ENCODE measurements at regions of chr6 and their contacts with region 1.

Region 1: DNA sequence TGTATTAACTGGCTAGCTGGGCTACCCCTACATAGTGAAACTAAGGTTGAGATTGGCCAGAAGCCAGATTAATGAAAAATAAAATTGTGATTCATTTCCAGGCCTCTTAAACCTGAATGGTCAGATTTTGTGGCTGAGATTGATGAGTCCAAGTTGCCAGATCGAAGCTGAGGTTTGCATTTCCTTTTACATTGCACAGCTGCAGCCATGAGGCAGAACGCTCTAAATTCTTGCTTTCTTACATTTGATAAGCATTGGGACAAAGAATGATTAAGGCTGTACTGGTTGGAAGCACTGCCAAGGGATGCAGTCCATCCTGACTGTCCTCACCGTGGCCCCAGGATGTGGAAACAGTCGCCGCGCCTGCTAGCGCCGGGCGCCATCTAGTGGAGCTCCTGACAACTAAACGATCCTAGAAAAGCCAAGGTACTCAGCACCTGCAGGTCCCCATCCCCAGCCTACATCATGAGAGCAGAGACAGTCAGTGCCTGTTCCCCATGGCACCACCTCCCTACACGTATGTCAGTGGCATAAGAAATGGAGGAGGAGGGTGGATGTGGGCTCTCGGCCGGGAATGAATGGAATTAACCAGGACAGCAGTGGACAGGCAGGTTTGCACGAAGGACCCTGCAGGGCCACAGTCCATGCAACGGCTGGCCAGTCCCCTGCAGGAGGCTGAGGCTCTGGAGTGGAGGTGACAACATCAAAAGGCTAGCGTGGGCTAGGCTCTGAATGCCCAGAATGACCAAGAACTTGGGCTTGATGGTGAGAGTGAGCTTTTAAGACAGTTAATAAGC is 19.0 kb downstream of the PXDC1 start:
- DNase-seq: peak; percentile 69
- H3K4me3 Mint-ChIP-seq: no peak overlapping the region
- H3K27ac Mint-ChIP-seq: no peak overlapping the region
- H3K4me1 Mint-ChIP-seq: peaks cover 7% of the 10 kb centered on the region
- H3K27me3 Mint-ChIP-seq: peaks cover 6% of the 10 kb centered on the region

Region 2: DNA sequence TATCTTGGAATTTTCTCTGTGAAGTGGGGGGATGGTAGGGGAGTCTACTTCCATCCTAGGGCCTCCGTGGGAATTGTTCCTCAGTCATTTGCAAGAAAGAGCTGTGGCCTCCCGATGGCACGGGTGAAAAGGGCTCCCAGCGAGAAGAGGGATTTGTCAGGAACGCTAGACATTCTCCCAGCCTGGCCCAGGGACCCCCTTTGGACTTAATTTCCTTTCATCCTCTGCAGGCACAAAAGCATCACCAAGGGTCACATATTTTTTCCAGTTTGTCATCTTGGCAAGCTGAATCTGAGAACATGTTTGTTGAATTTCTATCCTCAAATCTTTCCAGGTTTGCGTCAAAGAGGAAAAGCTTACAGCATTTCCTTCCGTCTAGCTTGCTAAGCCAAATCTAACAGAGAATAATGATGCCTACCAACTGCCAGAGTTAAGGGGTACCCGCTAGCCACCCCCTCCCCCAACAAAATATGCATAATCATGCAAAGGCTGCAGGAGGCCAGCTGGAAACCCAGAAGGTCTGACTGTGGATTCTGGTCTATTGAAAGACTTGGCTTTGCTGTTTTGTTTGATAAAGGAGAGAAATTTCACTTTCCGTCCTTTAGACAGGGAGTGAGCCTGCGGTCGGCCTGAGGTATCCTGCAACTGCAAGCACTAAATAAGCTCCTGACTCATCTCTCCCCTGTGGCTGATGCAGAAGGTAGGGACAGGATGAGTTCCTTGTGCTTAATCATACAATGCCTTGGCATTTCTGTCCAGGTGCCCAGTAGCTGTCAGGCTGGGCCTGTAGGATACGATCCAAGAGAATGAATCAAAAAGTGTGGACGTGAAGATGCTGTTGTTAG is 450.7 kb before region 1 on chr6:
- CTCF ChIA-PET with region 1: interaction called, 50 read pairs
- POLR2A ChIA-PET with region 1: no interaction called
- DNase-seq: no peak
- H3K4me3 Mint-ChIP-seq: no peak overlapping the region
- H3K27ac Mint-ChIP-seq: no peak overlapping the region
- H3K4me1 Mint-ChIP-seq: no peaks in the 10 kb centered on the region
- H3K27me3 Mint-ChIP-seq: no peaks in the 10 kb centered on the region

Region 3: DNA sequence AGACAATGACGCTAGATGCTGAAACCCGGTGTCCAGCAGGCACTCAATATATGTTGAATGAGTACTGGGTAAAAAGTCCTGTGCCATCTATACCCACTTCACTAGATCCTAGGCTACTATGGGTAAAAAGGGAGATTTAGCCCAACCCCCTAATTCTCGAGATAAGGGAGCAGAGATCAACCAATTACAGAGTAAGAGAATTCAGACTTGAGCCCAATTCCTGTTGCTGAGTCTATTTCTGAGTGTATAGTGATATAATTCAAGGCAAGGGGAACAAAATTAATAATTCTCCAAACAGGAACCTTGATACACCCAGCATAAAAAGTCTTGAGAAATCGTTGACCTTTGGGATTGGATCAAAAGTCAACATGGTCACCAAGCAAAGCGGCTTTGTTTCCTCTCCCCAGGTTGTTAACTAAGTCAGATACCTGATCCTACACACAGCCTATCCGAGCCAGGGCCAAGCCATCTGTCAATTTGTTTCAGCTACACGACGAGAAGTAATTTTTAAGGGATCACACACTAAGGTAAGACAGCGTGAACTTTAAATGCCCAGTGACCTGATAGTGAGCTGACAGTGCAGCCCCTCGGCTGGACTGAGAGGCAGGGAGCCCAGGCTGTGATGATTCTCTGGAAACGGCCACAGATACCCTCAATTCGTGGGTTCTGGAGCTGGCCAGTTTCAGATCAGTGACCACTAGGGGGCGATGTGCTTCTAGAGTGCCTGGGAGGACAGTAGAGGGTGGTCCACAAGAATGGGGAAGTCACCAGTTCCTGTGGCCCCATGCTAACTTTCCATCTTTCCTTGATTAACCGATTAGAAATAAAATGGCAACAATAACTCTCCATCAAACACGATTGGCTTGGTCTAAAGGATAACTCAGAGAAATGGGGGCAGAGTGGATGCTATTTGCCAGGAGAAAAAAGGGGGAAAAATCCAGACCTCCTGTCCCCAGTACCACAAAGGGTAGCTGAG is 321.9 kb before region 1 on chr6:
- CTCF ChIA-PET with region 1: interaction called, 11 read pairs
- POLR2A ChIA-PET with region 1: no interaction called
- DNase-seq: peak; percentile 51
- H3K4me3 Mint-ChIP-seq: no peak overlapping the region
- H3K27ac Mint-ChIP-seq: no peak overlapping the region
- H3K4me1 Mint-ChIP-seq: peaks cover 4% of the 10 kb centered on the region
- H3K27me3 Mint-ChIP-seq: no peaks in the 10 kb centered on the region

Region 4: GRCh38 chr6:3825851-3826581 is 93.5 kb after region 1 on chr6:
- CTCF ChIA-PET with region 1: no interaction called
- POLR2A ChIA-PET with region 1: no interaction called
- DNase-seq: no peak
- H3K4me3 Mint-ChIP-seq: no peak overlapping the region
- H3K27ac Mint-ChIP-seq: no peak overlapping the region
- H3K4me1 Mint-ChIP-seq: no peaks in the 10 kb centered on the region
- H3K27me3 Mint-ChIP-seq: no peaks in the 10 kb centered on the region

Measured in activated CD4-positive, alpha-beta memory T cell treated with anti-CD3 and anti-CD28 coated beads, Interleukin-2, amount 10 ng/mL, durations not matched to agents 7 days and 5 days (primary cell).